HCT116 (cell line): ENCODE measurements at regions of chr20 and their contacts with region 1.

Region 1: DNA sequence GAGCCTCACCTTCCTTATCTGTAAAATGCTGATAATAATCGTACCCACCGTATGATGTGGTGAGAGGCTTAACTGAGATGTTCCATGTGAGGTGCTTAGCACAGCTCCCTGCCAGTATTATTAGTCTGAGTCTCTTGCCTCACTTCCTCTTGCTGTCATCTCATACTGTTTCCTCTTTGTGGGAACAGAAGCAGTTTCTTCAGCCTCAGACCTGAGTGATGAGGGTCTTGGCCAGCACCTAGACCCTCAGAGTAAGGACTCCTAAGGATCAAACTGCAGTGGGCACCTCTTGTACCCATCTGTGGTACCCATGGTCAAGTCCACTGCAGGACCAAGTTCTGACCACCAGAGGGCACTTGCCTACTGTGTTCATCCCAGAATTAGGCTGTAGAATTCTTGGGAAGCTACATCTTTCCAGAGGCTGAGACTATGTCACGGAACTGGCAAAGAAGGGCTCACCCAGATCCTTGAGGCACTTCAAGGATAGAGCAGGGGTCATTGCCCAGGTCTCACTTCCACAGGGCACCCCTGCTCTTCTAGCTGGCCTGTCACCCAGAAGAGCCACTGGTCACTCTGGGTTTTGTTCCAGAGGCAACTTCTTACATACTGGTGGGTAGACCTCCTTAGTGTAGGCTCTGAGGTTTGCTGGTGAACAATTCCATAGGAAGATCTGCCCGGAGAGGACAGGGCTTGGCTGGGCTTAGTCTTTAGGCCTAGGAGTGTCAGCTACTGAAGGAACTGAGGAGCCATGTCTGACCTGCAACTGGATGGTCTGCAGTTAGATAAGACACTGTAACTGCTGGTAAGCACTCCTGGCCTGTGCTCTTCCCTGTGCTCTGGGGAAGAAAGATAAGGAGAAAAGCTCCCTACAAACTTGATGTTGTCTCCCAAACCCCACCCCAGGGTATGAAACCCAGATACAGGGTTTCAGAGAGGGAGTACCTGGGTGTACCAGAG is 20.6 kb upstream of the SGK2 start:
- DNase-seq: peak; percentile 24
- ATAC-seq: peak; percentile 87
- H3K4me3 ChIP-seq: no peak overlapping the region
- H3K27ac ChIP-seq: no peak overlapping the region
- H3K4me1 ChIP-seq: no peaks in the 10 kb centered on the region
- H3K27me3 ChIP-seq: no peaks in the 10 kb centered on the region
- CTCF ChIP-seq: peak; percentile 54 to 97 (median 94); a peak in 5 of 6 replicates
- POLR2A ChIP-seq: no peak
- RAD21 ChIP-seq: peak; percentile 80

Region 2: DNA sequence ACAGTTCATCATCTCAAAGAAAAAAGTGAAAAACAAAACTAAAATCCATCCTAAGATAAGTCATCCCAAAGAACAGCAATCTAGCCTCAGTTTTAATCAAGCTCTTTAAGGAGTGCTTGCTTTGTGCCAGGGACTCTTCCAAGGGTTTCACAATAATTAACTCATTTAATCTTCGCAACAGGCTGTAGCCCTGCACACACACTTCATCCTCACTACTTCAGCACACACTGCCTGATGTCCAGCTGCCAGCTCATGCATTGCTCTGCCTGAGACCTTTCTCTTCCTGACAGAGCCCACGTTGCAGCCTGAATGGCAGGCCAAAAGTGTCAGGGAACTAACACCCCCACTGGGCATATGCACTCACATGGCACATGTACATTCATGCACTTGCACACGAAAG is 327.3 kb before region 1 on chr20:
- CTCF ChIA-PET with region 1: no interaction called
- POLR2A ChIA-PET with region 1: no interaction called
- RAD21 ChIA-PET with region 1: no interaction called
- intact Hi-C with region 1: no loop called
- DNase-seq: no peak
- ATAC-seq: no peak
- H3K4me3 ChIP-seq: no peak overlapping the region
- H3K27ac ChIP-seq: no peak overlapping the region
- H3K4me1 ChIP-seq: no peaks in the 10 kb centered on the region
- H3K27me3 ChIP-seq: no peaks in the 10 kb centered on the region
- CTCF ChIP-seq: no peak
- POLR2A ChIP-seq: no peak
- RAD21 ChIP-seq: no peak

Region 3: DNA sequence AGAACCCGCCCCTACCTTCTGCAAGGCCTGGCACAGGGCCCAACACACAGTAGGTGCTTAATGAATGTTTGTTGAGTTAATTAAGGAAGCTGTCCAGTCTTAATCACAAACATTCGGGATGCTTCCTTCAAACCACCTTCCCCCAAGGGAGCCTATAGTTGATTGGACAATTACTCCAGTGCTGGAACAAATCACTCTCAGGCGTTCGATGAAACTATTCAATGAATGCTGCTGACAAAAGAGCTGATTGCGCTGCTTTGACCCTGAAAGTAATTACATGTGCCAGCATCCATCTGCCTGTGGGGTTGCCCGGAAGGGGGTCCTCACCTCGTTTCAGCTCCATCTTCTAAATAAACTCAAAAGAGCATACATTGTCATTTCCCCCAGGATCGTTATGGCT is 192.5 kb before region 1 on chr20:
- CTCF ChIA-PET with region 1: no interaction called
- POLR2A ChIA-PET with region 1: no interaction called
- RAD21 ChIA-PET with region 1: no interaction called
- intact Hi-C with region 1: no loop called
- DNase-seq: no peak
- ATAC-seq: no peak
- H3K4me3 ChIP-seq: no peak overlapping the region
- H3K27ac ChIP-seq: no peak overlapping the region
- H3K4me1 ChIP-seq: no peaks in the 10 kb centered on the region
- H3K27me3 ChIP-seq: peaks cover 33% of the 10 kb centered on the region
- CTCF ChIP-seq: no peak
- POLR2A ChIP-seq: no peak
- RAD21 ChIP-seq: no peak

Region 4: GRCh38 chr20:43448748-43449535 is 89.3 kb before region 1 on chr20:
- CTCF ChIA-PET with region 1: interaction called, 11 read pairs
- POLR2A ChIA-PET with region 1: no interaction called
- RAD21 ChIA-PET with region 1: no interaction called
- intact Hi-C with region 1: no loop called
- DNase-seq: peak; percentile 36
- ATAC-seq: peak; percentile 71
- H3K4me3 ChIP-seq: no peak overlapping the region
- H3K27ac ChIP-seq: no peak overlapping the region
- H3K4me1 ChIP-seq: peaks cover 0 to 10% of the 10 kb centered on the region in 2 experiments; a peak in 2 of 4 replicates
- H3K27me3 ChIP-seq: no peaks in the 10 kb centered on the region
- CTCF ChIP-seq: peak; percentile 68 to 86 (median 75); a peak in 5 of 6 replicates
- POLR2A ChIP-seq: no peak
- RAD21 ChIP-seq: peak; percentile 93

Region 5: DNA sequence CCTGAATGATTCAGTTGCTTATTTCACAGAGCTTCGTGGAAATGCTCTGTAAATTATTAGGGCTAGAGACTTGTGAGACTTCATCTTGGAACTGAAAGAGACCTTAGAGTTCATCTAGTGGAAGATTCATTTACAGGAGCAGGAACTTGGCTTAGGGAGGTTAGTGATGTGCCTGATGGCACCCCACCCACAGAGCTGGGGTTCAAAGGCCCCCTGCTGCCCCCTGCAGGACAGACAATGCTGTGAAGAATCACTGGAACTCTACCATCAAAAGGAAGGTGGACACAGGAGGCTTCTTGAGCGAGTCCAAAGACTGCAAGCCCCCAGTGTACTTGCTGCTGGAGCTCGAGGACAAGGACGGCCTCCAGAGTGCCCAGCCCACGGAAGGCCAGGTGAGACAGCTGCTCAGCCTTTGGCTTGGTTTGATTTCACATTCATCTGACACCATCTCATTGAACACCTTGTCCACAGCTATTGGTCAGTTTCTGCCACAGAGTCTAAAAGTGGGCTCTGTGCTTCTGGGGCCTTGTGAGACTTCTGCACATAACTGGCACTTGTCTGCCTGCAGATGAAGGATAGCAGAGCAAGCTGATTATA is 153.8 kb after region 1 on chr20:
- CTCF ChIA-PET with region 1: interaction called, 76 read pairs
- POLR2A ChIA-PET with region 1: no interaction called
- RAD21 ChIA-PET with region 1: interaction called, 7 read pairs
- intact Hi-C with region 1: loop called (anchors 1 kb)
- DNase-seq: peak; percentile 29
- ATAC-seq: peak; percentile 91
- H3K4me3 ChIP-seq: no peak overlapping the region
- H3K27ac ChIP-seq: no peak overlapping the region
- H3K4me1 ChIP-seq: no peaks in the 10 kb centered on the region
- H3K27me3 ChIP-seq: no peaks in the 10 kb centered on the region
- CTCF ChIP-seq: peak; percentile 60 to 79 (median 77)
- POLR2A ChIP-seq: no peak
- RAD21 ChIP-seq: peak; percentile 72

Region 6: GRCh38 chr20:43749734-43750294 is 211.6 kb after region 1 on chr20:
- CTCF ChIA-PET with region 1: interaction called, 4 read pairs
- POLR2A ChIA-PET with region 1: no interaction called
- RAD21 ChIA-PET with region 1: no interaction called
- intact Hi-C with region 1: loop called (anchors 1 kb)
- DNase-seq: peak; percentile 29
- ATAC-seq: peak; percentile 96
- H3K4me3 ChIP-seq: no peak overlapping the region; a peak in 1 of 4 replicates
- H3K27ac ChIP-seq: no peak overlapping the region
- H3K4me1 ChIP-seq: peaks cover 2 to 39% of the 10 kb centered on the region in 2 experiments; a peak in 3 of 4 replicates
- H3K27me3 ChIP-seq: no peaks in the 10 kb centered on the region
- CTCF ChIP-seq: peak; percentile 96 to 99 (median 98)
- POLR2A ChIP-seq: no peak
- RAD21 ChIP-seq: peak; percentile 99

Region 7: GRCh38 chr20:44196271-44196670 is 658.1 kb after region 1 on chr20:
- CTCF ChIA-PET with region 1: no interaction called
- POLR2A ChIA-PET with region 1: no interaction called
- RAD21 ChIA-PET with region 1: no interaction called
- intact Hi-C with region 1: loop called (anchors 10 kb)
- DNase-seq: no peak
- ATAC-seq: peak; percentile 60
- H3K4me3 ChIP-seq: no peak overlapping the region
- H3K27ac ChIP-seq: no peak overlapping the region
- H3K4me1 ChIP-seq: no peaks in the 10 kb centered on the region
- H3K27me3 ChIP-seq: no peaks in the 10 kb centered on the region
- CTCF ChIP-seq: peak in 2 of 3 experiments; percentile 23 to 34; a peak in 2 of 6 replicates
- POLR2A ChIP-seq: no peak
- RAD21 ChIP-seq: no peak